PC-9 (cell line): ENCODE measurements at regions of chr5 and their contacts with region 1.

Region 1: GRCh38 chr5:56900858-56901578 is 8.4 kb upstream of the SETD9 start:
- DNase-seq: peak in 1 of 2 experiments; percentile 31
- H3K4me3 ChIP-seq: no peak overlapping the region
- H3K27ac ChIP-seq: no peak overlapping the region
- H3K4me1 ChIP-seq: 0 out of 2 replicates have a peak, but pooled peaks cover 4% of the 10 kb centered on the region
- H3K27me3 ChIP-seq: no peaks in the 10 kb centered on the region
- CTCF ChIP-seq: peak; percentile 79

Region 2: DNA sequence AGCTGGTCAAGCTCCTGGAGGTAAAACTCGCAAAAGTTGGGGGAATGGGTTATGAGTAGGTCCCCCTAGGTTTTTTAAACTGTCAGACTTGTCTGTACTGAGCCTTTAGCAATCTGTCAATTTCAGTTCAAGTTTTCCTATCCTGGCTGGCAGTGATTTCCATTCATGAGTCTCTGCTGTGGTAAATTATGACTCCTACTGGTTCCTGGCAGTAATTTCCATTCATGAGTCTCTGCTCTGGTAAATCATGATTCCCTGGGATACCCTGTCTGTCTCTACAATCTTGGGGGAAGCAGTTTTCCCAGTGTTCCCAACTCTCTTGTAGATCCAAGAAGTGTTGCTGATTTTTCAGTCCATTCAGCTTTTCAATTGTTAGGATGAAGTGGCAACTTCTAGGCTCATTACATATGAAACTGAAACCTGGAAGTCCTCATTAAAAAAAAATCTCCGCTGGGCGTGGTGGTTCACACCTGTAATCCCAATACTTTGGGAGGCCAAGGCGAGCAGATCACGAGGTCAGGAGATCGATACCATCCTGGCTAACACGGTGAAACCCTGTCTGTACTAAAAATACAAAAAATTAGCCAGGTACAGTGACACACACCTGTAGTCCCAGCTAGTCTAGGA is 181.5 kb after region 1 on chr5:
- CTCF ChIA-PET with region 1: no interaction called
- POLR2A ChIA-PET with region 1: no interaction called
- intact Hi-C with region 1: loop called (anchors 1 kb)
- DNase-seq: peak in 1 of 2 experiments; percentile 44
- H3K4me3 ChIP-seq: no peak overlapping the region
- H3K27ac ChIP-seq: no peak overlapping the region
- H3K4me1 ChIP-seq: no peaks in the 10 kb centered on the region
- H3K27me3 ChIP-seq: no peaks in the 10 kb centered on the region
- CTCF ChIP-seq: peak; percentile 76